MCF 10A (cell line): ENCODE measurements at regions of chr7 and their contacts with region 1.

Region 1: GRCh38 chr7:95545078-95545498 is 51.2 kb downstream of the PDK4 start:
- DNase-seq: peak; percentile 77
- H3K4me3 Mint-ChIP-seq: peak overlapping the region; percentile 59
- H3K27ac Mint-ChIP-seq: peak overlapping the region; percentile 76
- H3K4me1 Mint-ChIP-seq: peaks cover 33% of the 10 kb centered on the region
- H3K27me3 Mint-ChIP-seq: peaks cover 19% of the 10 kb centered on the region
- CTCF ChIP-seq: peak; percentile 61

Region 2: GRCh38 chr7:95263785-95264575 is 281.1 kb before region 1 on chr7:
- CTCF ChIA-PET with region 1: no interaction called
- POLR2A ChIA-PET with region 1: no interaction called
- intact Hi-C with region 1: no loop called
- DNase-seq: peak; percentile 80
- H3K4me3 Mint-ChIP-seq: peak overlapping the region; percentile 3
- H3K27ac Mint-ChIP-seq: peak overlapping the region; percentile 26
- H3K4me1 Mint-ChIP-seq: peaks cover 12% of the 10 kb centered on the region
- H3K27me3 Mint-ChIP-seq: no peaks in the 10 kb centered on the region
- CTCF ChIP-seq: no peak

Region 3: GRCh38 chr7:95527033-95527775 is 17.9 kb before region 1 on chr7:
- CTCF ChIA-PET with region 1: interaction called, 98 read pairs
- POLR2A ChIA-PET with region 1: interaction called, 16 read pairs
- intact Hi-C with region 1: loop called (anchors 1 kb)
- DNase-seq: peak; percentile 83
- H3K4me3 Mint-ChIP-seq: no peak overlapping the region
- H3K27ac Mint-ChIP-seq: no peak overlapping the region
- H3K4me1 Mint-ChIP-seq: peaks cover 6% of the 10 kb centered on the region
- H3K27me3 Mint-ChIP-seq: peaks cover 38% of the 10 kb centered on the region
- CTCF ChIP-seq: peak; percentile 80

Region 4: GRCh38 chr7:95577137-95577536 is 32.0 kb after region 1 on chr7:
- CTCF ChIA-PET with region 1: interaction called, 6 read pairs
- POLR2A ChIA-PET with region 1: interaction called, 18 read pairs
- intact Hi-C with region 1: no loop called
- DNase-seq: peak; percentile 72
- H3K4me3 Mint-ChIP-seq: no peak overlapping the region
- H3K27ac Mint-ChIP-seq: peak overlapping the region; percentile 66
- H3K4me1 Mint-ChIP-seq: peaks cover 7% of the 10 kb centered on the region
- H3K27me3 Mint-ChIP-seq: no peaks in the 10 kb centered on the region
- CTCF ChIP-seq: no peak

Region 5: GRCh38 chr7:95608359-95609173 is 63.5 kb after region 1 on chr7:
- CTCF ChIA-PET with region 1: interaction called, 9 read pairs
- POLR2A ChIA-PET with region 1: interaction called, 34 read pairs
- intact Hi-C with region 1: loop called (anchors 2 kb)
- DNase-seq: peak; percentile 95
- H3K4me3 Mint-ChIP-seq: peak overlapping the region; percentile 53
- H3K27ac Mint-ChIP-seq: peak overlapping the region; percentile 90
- H3K4me1 Mint-ChIP-seq: peaks cover 13% of the 10 kb centered on the region
- H3K27me3 Mint-ChIP-seq: no peaks in the 10 kb centered on the region
- CTCF ChIP-seq: no peak

Region 6: DNA sequence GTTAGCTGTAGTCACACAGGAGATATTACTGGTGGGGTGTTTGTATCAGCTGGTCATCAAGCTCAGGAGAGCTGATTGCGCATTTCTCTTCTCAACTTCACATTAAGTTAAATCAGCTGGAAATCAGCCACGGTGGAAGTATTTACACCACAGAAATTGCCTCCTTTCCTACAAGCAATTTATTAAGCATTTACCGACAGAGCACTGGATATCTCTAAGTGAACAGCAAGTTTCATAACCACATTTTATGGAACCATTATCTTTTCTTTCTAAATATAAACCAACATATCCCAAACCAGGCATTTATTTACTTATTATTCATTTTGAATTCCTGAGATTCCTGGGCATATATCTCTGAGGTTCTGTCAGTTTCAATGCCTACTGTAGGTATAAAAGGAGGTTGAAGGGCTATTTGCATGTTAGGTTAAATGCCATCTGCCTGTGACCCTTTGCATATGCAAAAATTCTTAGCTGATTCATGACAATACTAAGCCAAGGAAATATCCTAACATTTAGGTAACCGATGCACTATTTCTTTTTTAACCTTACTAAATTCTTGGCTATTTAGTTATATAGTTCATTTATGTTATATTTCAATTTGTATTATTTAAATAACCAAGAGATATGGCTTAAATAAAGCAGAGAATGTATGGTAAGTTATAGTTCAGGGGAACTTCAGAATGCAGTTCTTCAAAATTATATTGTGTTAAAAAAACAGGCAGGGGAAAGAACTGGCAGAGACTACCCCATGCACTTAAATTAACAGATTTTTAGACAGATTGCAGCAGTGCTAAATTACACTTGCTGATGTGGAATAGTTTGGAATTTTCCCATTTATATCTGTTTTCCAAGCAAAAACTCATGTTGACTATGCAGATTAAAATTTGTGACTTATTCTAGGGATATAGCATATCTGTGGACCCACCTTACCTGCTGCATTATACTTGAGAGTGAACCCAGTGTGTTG is 284.0 kb after region 1 on chr7:
- CTCF ChIA-PET with region 1: no interaction called
- POLR2A ChIA-PET with region 1: no interaction called
- intact Hi-C with region 1: no loop called
- DNase-seq: no peak
- H3K4me3 Mint-ChIP-seq: no peak overlapping the region
- H3K27ac Mint-ChIP-seq: no peak overlapping the region
- H3K4me1 Mint-ChIP-seq: no peaks in the 10 kb centered on the region
- H3K27me3 Mint-ChIP-seq: peaks cover 43% of the 10 kb centered on the region
- CTCF ChIP-seq: no peak